ENCODE measurements at regions of chr13 and their contacts with region 1.

Region 1: DNA sequence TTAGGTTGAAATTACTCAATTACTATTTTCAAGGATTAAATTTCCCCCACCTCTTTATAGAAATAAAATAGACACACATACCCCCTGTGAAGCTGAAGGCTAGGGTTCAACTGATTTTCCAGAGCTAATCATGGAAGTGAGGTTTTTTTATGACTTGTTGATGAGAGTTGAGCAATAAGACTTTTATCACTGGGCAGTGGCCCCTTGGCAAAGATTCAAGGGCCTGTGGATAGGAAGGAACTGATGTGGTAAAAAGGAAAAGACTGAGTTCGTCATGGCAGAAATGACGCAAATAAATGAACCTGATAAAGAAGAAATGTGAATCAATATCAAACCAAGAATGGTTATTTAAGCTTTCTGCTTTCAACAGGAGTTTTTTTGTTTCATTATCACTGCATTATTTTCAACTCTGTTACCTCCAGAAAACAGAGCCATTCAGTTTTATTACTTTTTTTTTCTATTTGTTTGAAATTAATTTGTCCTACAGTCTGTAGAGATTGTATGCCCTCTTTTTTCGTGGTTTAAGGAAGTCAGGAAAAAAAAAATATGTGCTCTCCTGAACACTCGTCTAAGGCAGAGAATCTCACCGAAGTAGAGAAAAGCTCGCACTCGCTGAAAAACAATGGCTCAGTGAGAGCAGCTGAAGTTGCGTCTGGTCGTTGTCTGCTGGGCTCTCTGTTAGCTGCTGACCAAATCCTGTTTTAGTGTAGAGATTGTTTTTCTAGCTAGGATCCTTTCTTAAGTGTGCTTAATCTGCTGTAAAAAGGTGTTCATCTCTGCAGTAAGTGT is 38.9 kb downstream of the STOML3 start:
- DNase-seq: peak; percentile 78
- H3K4me3 ChIP-seq: peak overlapping the region in 2 of 3 experiments; percentile 25 to 56
- H3K27ac ChIP-seq: no peak overlapping the region
- H3K4me1 ChIP-seq: peaks cover 9% of the 10 kb centered on the region
- H3K27me3 ChIP-seq: no peaks in the 10 kb centered on the region
- CTCF ChIP-seq: no peak
- POLR2A ChIP-seq: no peak

Region 2: DNA sequence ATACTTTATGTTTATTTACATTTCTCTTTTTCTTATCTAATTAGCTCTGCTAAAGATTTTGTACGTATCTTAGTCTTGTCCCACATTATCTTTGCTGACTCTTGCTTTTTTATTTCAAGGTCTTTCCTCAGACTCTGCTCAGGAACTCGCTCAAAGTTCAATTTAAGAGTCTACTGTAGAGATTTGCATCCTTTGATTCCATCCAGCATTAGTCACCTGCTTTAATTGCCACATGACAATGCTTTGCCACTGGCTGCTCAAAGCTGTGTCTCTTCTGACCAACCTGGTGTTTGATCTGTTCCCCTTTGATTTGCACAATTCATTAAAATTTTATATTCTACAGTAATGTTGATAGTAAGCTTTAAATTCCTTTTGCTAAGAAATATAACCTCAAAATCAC is 422.7 kb before region 1 on chr13:
- CTCF ChIA-PET with region 1: no interaction called
- POLR2A ChIA-PET with region 1: no interaction called
- dilution Hi-C with region 1: no loop called
- intact Hi-C with region 1: loop called (anchors 10 kb)
- DNase-seq: no peak
- H3K4me3 ChIP-seq: no peak overlapping the region
- H3K27ac ChIP-seq: no peak overlapping the region
- H3K4me1 ChIP-seq: no peaks in the 10 kb centered on the region
- H3K27me3 ChIP-seq: peaks cover 0 to 2% of the 10 kb centered on the region in 2 experiments
- CTCF ChIP-seq: no peak
- POLR2A ChIP-seq: no peak

Region 3: GRCh38 chr13:38796890-38797289 is 154.8 kb before region 1 on chr13:
- CTCF ChIA-PET with region 1: no interaction called
- POLR2A ChIA-PET with region 1: no interaction called
- dilution Hi-C with region 1: no loop called
- intact Hi-C with region 1: no loop called
- DNase-seq: no peak
- H3K4me3 ChIP-seq: no peak overlapping the region
- H3K27ac ChIP-seq: no peak overlapping the region
- H3K4me1 ChIP-seq: no peaks in the 10 kb centered on the region
- H3K27me3 ChIP-seq: no peaks in the 10 kb centered on the region
- CTCF ChIP-seq: no peak
- POLR2A ChIP-seq: no peak

Region 4: DNA sequence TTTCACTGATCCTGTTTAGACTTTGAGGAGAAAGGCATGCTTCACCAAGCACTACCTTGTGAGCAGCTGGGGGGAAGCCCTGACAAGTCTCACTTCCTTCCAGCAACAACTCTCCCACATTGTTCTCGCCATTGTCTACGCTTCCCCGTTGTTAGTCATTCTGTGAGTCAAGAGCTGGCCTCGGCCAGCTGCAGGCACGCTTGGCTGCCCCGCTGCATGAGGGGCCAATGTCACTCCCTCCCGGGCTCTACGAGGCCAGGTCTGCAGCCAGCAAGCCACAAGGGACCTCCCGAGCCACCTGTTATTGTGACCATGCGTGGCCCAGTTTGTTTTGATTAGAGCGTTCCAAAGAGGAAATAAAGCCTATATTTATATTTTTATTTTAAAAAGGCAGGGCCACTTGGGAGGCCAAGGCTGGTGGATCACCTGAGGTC is 1493.9 kb after region 1 on chr13:
- CTCF ChIA-PET with region 1: no interaction called
- POLR2A ChIA-PET with region 1: no interaction called
- dilution Hi-C with region 1: no loop called
- intact Hi-C with region 1: no loop called
- DNase-seq: peak; percentile 99
- H3K4me3 ChIP-seq: no peak overlapping the region
- H3K27ac ChIP-seq: peak overlapping the region; percentile 99
- H3K4me1 ChIP-seq: peaks cover 36% of the 10 kb centered on the region
- H3K27me3 ChIP-seq: no peaks in the 10 kb centered on the region
- CTCF ChIP-seq: no peak
- POLR2A ChIP-seq: peak; percentile 42